ENCODE measurements at regions of chr2 and their contacts with region 1.

Region 1: GRCh38 chr2:155815886-155816285 is 516.6 kb downstream of the NR4A2 start:
- DNase-seq: peak; percentile 5
- ATAC-seq: peak; percentile 94
- H3K4me3 ChIP-seq: no peak overlapping the region
- H3K27ac ChIP-seq: no peak overlapping the region
- H3K4me1 ChIP-seq: no peaks in the 10 kb centered on the region
- H3K27me3 ChIP-seq: no peaks in the 10 kb centered on the region
- CTCF ChIP-seq: peak; percentile 69 to 74 (median 69)
- EP300 ChIP-seq: no peak
- POLR2A ChIP-seq: no peak
- RAD21 ChIP-seq: peak; percentile 82

Region 2: GRCh38 chr2:155368934-155369333 is 447.0 kb before region 1 on chr2:
- CTCF ChIA-PET with region 1: interaction called, 10 read pairs
- POLR2A ChIA-PET with region 1: no interaction called
- RAD21 ChIA-PET with region 1: interaction called, 10 read pairs
- SMC1A ChIA-PET with region 1: interaction called, 6 read pairs
- in situ Hi-C with region 1: no loop called
- intact Hi-C with region 1: loop called (anchors 2 kb)
- DNase-seq: no peak
- ATAC-seq: peak; percentile 64
- H3K4me3 ChIP-seq: no peak overlapping the region
- H3K27ac ChIP-seq: no peak overlapping the region
- H3K4me1 ChIP-seq: no peaks in the 10 kb centered on the region
- H3K27me3 ChIP-seq: no peaks in the 10 kb centered on the region
- CTCF ChIP-seq: peak; percentile 9 to 30 (median 14); a peak in 2 of 6 replicates
- EP300 ChIP-seq: no peak
- POLR2A ChIP-seq: no peak
- RAD21 ChIP-seq: no peak

Region 3: GRCh38 chr2:155377266-155377680 is 438.6 kb before region 1 on chr2:
- CTCF ChIA-PET with region 1: interaction called, 89 read pairs
- POLR2A ChIA-PET with region 1: interaction called, 3 read pairs
- RAD21 ChIA-PET with region 1: interaction called, 91 read pairs
- SMC1A ChIA-PET with region 1: interaction called, 69 read pairs
- in situ Hi-C with region 1: loop called (anchors 5 kb)
- intact Hi-C with region 1: loop called (anchors 1 kb)
- DNase-seq: no peak
- ATAC-seq: peak; percentile 73
- H3K4me3 ChIP-seq: no peak overlapping the region
- H3K27ac ChIP-seq: no peak overlapping the region
- H3K4me1 ChIP-seq: no peaks in the 10 kb centered on the region
- H3K27me3 ChIP-seq: no peaks in the 10 kb centered on the region
- CTCF ChIP-seq: peak in 2 of 3 experiments; percentile 10 to 17; a peak in 3 of 6 replicates
- EP300 ChIP-seq: no peak
- POLR2A ChIP-seq: no peak
- RAD21 ChIP-seq: peak; percentile 50

Region 4: DNA sequence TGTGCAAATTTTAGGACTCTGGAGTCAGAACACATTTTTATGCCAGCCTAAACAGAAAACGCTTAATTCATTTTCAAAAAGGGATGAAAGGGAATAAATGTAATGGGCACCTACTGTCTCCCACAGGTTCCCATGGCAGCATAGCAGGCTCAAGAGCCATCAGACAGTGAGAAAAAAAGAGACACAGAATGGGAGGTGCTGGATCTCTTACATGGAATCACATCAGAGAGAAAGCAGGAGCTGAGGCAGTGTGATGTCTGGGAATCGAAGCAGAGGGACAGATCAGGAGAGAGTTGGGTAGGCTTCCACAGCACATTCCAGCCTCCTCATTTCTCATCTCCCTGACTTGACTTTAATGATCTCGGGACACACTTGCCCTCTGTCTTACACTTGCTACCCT is 433.1 kb before region 1 on chr2:
- CTCF ChIA-PET with region 1: interaction called, 89 read pairs
- POLR2A ChIA-PET with region 1: interaction called, 3 read pairs
- RAD21 ChIA-PET with region 1: interaction called, 91 read pairs
- SMC1A ChIA-PET with region 1: interaction called, 69 read pairs
- in situ Hi-C with region 1: loop called (anchors 5 kb)
- intact Hi-C with region 1: loop called (anchors 1 kb)
- DNase-seq: no peak
- ATAC-seq: no peak
- H3K4me3 ChIP-seq: no peak overlapping the region
- H3K27ac ChIP-seq: no peak overlapping the region
- H3K4me1 ChIP-seq: no peaks in the 10 kb centered on the region
- H3K27me3 ChIP-seq: no peaks in the 10 kb centered on the region
- CTCF ChIP-seq: no peak
- EP300 ChIP-seq: no peak
- POLR2A ChIP-seq: no peak
- RAD21 ChIP-seq: no peak

Region 5: DNA sequence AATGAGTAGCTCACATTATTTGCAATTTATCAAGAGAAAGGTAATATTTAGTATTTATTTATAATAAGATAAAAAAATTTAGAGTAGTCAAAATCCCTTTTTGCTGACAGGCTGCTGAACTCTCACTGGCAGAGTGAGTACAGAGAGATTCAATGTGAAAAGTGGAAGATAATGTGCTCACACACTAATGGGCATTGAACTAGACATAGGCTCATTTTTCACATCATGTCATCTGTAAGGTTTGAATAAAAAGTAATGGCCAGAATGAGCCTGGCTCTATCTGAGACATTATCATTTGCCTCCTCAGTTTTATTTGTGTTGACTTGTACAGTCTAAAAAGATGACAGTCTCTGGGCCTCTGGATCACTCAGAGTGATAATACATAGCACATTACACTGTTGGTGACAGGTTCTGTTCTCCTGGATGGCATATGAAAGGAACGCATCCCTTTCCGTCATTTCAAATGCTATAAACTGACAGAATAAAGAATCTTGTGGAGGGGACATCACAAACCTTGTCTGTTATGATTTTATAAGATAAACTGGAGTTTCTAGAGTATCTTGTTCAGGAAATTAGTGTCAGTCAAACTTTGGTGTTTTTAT is 296.3 kb before region 1 on chr2:
- CTCF ChIA-PET with region 1: no interaction called
- POLR2A ChIA-PET with region 1: no interaction called
- RAD21 ChIA-PET with region 1: no interaction called
- SMC1A ChIA-PET with region 1: no interaction called
- in situ Hi-C with region 1: no loop called
- intact Hi-C with region 1: loop called (anchors 10 kb)
- DNase-seq: no peak
- ATAC-seq: no peak
- H3K4me3 ChIP-seq: no peak overlapping the region
- H3K27ac ChIP-seq: no peak overlapping the region
- H3K4me1 ChIP-seq: no peaks in the 10 kb centered on the region
- H3K27me3 ChIP-seq: no peaks in the 10 kb centered on the region
- CTCF ChIP-seq: no peak
- EP300 ChIP-seq: no peak
- POLR2A ChIP-seq: no peak
- RAD21 ChIP-seq: no peak

Region 6: DNA sequence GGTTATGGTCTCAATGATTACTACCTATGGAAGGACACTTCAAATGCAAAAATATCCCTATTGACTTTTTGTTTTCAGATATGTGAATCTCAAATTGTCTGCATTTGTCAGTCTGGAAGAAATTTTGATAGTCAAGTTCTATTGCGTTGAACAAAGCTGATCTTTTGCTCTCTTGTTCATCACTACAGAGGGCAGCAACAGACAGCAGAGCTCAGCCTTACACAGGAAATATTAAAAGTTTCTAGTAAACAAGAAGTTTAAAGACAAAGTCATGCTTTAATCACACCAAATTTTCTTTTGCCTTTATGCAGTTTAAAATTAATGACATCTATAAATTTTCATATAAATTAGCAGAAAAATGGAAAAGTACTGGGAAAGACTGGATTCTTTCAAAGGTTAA is 100.9 kb before region 1 on chr2:
- CTCF ChIA-PET with region 1: no interaction called
- POLR2A ChIA-PET with region 1: no interaction called
- RAD21 ChIA-PET with region 1: no interaction called
- SMC1A ChIA-PET with region 1: no interaction called
- in situ Hi-C with region 1: no loop called
- intact Hi-C with region 1: no loop called
- DNase-seq: no peak
- ATAC-seq: no peak
- H3K4me3 ChIP-seq: no peak overlapping the region
- H3K27ac ChIP-seq: no peak overlapping the region
- H3K4me1 ChIP-seq: no peaks in the 10 kb centered on the region
- H3K27me3 ChIP-seq: no peaks in the 10 kb centered on the region
- CTCF ChIP-seq: no peak
- EP300 ChIP-seq: no peak
- POLR2A ChIP-seq: no peak
- RAD21 ChIP-seq: no peak

Measured in GM12878 (cell line).